CD4-positive, alpha-beta memory T cell (primary cell): ENCODE measurements at regions of chr12 and their contacts with region 1.

Region 1: DNA sequence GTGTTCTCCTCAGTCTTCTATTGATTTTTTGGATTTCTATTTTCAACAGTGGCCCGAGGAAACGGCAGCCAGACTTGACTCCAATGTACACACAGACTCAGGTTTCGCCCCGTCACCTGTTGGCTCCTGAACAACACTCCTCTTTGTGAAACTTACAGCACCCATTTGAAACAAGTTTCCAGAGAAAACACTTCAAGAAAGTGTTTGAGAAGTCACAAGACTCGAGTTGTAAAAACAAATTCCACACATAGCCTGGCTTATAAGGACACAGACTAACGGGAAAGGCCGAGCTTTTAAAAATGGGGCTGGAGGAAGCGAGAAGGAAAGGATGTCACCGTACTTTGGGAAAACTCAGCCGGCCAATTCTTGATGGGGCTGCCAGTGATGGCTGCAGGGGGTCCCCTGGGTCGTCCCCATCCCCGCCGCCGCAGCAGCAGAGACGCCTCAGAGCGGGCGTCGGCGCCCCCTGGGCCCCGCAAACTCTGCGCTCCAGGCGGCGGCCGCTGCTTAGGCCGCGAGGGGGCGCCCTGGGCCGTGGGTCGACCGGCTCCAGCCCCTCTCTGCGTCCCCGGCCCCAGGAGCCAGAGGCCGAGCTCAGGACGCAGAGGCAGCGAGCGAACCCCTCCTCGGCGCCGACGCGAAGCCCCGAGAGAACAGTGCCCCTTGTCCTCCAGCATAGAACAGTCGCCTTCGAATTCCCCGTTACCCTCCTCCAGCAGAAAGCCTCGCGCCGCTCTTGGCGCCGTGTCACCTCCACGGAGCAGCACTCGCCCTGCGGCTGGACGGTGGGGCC is 106.9 kb downstream of the PRICKLE1 start:
- DNase-seq: peak; percentile 15 to 38 (median 28)
- H3K4me3 ChIP-seq: peak overlapping the region in 1 of 2 donors; percentile 51
- H3K4me3 Mint-ChIP-seq: peak overlapping the region; percentile 75 to 82 (median 79)
- H3K27ac ChIP-seq: no peak overlapping the region
- H3K27ac Mint-ChIP-seq: no peak overlapping the region
- H3K4me1 ChIP-seq: peaks cover 14% of the 10 kb centered on the region
- H3K4me1 Mint-ChIP-seq: peaks cover 6 to 17% (median 13%) of the 10 kb centered on the region in 4 donors
- H3K27me3 ChIP-seq: peaks cover 25% of the 10 kb centered on the region
- H3K27me3 Mint-ChIP-seq: peaks cover 48 to 60% of the 10 kb centered on the region in 2 donors

Region 2: DNA sequence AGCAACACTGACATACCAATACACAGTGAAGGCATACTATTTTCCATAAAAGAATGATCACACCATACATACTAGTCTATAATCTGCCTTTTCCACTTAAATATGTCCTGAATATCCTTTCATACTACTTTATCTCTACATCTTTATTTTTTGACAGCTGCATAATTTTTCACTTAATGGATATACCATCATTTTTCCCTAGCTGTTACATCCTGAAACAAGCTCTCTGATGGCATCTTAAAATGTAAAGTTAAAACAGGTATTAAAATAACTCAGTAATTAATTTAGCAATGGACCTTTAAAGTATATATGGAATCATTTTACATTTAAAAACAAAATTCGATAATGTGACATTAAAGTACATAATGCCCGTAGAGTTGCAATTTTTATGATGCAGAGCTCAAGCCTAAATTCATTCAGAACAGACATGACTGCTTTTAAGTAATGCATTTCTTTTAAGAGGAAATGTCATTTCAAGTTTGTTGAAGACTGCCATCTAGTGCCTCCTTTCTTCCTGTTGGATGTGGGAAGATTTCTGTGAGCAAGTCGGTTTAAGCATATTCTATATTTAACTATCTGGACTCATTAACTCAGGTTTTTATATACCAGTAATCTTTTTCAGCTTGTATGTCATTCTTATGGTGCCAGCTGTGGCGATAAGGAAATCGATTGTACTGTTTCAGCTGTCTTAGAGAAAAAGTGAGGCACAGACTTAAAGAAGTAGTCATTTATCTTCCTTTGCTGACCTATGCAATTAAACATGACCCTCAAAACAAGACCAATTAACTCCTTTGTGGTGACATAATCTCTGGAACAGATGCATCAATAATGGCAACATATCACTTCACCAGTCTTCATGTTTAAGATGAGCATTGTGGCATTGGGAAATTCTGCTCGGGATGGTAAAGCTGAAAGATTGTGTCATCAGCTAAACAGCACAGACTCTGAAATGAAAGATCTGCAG is 86.6 kb after region 1 on chr12:
- CTCF ChIA-PET with region 1: no interaction called
- POLR2A ChIA-PET with region 1: no interaction called
- intact Hi-C with region 1: loop called (anchors 5 kb)
- DNase-seq: no peak
- H3K4me3 ChIP-seq: no peak overlapping the region
- H3K4me3 Mint-ChIP-seq: no peak overlapping the region
- H3K27ac ChIP-seq: no peak overlapping the region
- H3K27ac Mint-ChIP-seq: no peak overlapping the region
- H3K4me1 ChIP-seq: no peaks in the 10 kb centered on the region
- H3K4me1 Mint-ChIP-seq: no peaks in the 10 kb centered on the region
- H3K27me3 ChIP-seq: no peaks in the 10 kb centered on the region
- H3K27me3 Mint-ChIP-seq: peaks cover 0 to 1% of the 10 kb centered on the region in 2 donors

Region 3: DNA sequence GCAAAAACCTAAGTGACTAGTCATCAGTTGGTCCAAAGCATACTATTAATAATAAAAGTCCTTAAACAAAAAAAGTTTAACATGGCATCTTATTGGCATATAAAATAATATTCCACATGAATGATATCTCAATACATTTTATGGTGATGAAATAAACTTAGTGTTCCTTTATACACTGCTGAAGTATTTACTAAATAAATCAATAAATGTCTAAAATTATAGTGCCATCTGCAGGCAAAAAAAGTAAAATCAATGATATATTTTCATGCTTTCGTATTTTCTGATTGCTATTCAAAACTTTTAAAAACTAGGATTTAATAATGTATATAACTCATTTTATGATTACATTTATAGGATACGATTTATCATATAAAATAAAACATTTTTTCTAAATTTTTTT is 1245.5 kb after region 1 on chr12:
- CTCF ChIA-PET with region 1: no interaction called
- POLR2A ChIA-PET with region 1: no interaction called
- intact Hi-C with region 1: loop called (anchors 5 kb)
- DNase-seq: peak in 3 of 5 donors; percentile 2 to 6 (median 3)
- H3K4me3 ChIP-seq: no peak overlapping the region
- H3K4me3 Mint-ChIP-seq: no peak overlapping the region
- H3K27ac ChIP-seq: no peak overlapping the region
- H3K27ac Mint-ChIP-seq: no peak overlapping the region
- H3K4me1 ChIP-seq: no peaks in the 10 kb centered on the region
- H3K4me1 Mint-ChIP-seq: peaks cover 0 to 6% (median 3%) of the 10 kb centered on the region in 4 donors
- H3K27me3 ChIP-seq: no peaks in the 10 kb centered on the region
- H3K27me3 Mint-ChIP-seq: no peaks in the 10 kb centered on the region